Activated CD4-positive, alpha-beta T cell treated with anti-CD3 and anti-CD28 coated beads, Interleukin-2, amount 10 ng/mL, durations not matched to agents 24 days and 14 days (primary cell): ENCODE measurements at regions of chr1 and their contacts with region 1.

Region 1: DNA sequence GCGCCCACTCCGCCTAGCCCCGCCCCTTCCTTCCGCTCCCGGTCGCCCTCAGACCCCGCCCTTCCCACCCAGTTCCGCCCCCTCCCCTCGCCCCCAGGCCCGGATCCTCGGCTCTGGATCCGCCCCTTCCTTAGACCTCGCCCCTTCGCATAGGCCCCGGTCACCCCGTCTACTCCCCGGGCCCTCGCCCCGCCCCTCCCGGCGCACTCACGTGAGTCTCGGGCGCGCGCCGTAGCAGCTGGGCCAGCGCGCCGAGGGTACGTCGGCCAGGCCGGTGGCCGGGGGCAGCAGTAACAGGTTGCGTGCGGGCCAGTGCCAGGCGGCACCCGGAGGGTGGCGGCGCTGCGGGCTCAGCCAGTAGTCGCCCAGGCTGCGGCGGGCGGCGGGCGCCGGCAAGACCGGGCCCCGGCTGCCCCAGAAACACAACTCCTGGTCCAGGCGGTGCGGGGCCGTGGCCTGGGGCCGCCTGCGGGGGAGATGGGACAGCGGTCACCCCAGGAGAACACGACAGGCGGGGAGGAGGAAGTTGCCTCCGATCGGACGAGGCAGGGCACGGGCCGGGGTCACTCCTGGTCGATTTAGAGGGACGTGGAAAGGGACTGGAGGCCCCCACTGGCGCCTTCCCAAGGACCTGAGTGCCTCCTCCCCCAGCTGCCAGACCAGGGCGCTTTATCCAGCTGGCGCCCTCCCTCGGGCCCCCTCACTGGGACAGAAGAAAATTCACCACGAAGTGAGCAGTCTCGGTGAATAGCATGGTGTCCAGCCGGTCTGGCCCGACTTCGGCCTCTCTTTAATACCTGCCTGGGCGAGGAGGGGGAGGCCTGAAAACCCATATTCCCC is 10.7 kb downstream of the FAM229A start:
- DNase-seq: peak; percentile 98
- H3K4me3 Mint-ChIP-seq: peak overlapping the region; percentile 86
- H3K27ac Mint-ChIP-seq: peak overlapping the region; percentile 65
- H3K4me1 Mint-ChIP-seq: peaks cover 30% of the 10 kb centered on the region
- H3K27me3 Mint-ChIP-seq: peaks cover 2% of the 10 kb centered on the region

Region 2: GRCh38 chr1:32394141-32394889 is 42.7 kb after region 1 on chr1 and contains the start of gene BSDC1:
- intact Hi-C with region 1: loop called (anchors 2 kb)
- DNase-seq: peak; percentile 100
- H3K4me3 Mint-ChIP-seq: peak within 1 kb of the TSS; percentile 94
- H3K27ac Mint-ChIP-seq: peak within 1 kb of the TSS; percentile 99
- H3K4me1 Mint-ChIP-seq: peaks cover 21% of the 10 kb centered on the region
- H3K27me3 Mint-ChIP-seq: peaks cover 4% of the 10 kb centered on the region
- total RNA-seq, gene BSDC1: 44.8 and 49.5 TPM in 2 replicates